OCI-LY7 (cell line): ENCODE measurements at regions of chr14 and their contacts with region 1.

Region 1: DNA sequence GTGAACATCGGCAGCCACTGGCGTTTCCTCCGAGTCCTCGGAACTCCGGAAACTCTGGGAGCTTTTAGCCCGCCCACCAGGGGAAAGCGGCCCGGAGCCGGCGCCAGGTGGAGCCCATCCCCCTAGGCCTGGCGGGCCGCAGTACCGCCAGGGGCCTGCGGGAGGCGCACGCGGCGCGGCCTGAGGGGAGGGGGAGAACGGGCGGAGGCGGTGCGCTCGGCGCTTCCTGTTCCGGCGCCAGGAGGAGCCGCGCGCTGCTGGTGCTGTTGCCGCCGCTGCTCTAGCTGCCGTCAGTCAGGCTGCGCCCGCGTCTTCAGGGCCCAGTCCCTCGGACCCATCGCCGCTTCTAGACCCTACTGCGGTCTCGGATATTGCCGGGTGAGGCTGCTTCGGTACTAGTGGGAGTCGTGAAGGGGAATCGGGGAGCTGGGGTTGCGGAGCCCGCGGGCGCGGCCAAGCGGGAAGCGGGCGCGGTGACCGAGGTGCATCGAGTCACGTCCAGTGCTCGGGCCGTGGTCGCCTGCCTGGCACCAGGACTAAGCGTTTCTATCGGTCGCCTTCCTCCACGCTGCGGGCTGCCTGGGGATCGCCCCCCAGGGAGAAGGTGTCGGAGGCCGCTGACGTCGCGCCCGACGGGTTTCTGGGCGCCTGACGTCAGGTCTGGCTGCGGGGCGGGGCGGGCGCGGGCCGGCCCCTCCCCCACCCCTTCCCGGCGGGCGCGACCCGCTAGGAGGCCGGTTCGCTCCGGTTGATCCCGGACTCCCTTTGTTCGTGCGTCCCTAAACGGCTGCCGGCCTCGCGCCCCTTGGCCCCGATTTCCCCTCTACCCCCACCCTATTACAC is at the start of gene MAPK1IP1L:
- DNase-seq: peak; percentile 92
- H3K4me3 ChIP-seq: peak within 1 kb of the TSS; percentile 95
- H3K27ac ChIP-seq: peak within 1 kb of the TSS; percentile 81
- H3K4me1 ChIP-seq: peaks cover 20% of the 10 kb centered on the region
- CTCF ChIP-seq: peak; percentile 87
- total RNA-seq, gene MAPK1IP1L: 24.6 and 27.9 TPM in 2 replicates

Region 2: DNA sequence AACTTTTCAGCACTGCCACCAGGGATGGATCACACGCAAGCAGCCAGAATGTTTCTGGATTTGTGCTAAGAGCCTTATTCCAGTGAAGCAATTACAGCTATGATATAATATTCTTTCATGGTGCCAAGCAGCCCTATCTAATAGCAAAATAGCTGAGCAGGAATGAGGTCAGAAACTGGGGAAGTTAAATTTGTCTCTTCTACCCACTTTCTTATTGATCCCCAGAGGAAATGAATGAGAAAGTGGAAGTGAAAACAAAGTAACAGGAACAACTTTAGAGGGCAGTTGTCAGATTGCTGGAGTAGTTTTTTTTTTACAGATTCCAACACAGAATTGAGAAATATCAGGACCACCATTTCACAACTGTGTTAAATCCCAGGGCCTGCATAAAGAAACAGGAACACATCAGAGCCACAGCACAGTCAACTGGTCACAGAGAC is 193.8 kb before region 1 on chr14:
- CTCF ChIA-PET with region 1: no interaction called
- POLR2A ChIA-PET with region 1: no interaction called
- intact Hi-C with region 1: no loop called
- DNase-seq: peak; percentile 33
- H3K4me3 ChIP-seq: no peak overlapping the region
- H3K27ac ChIP-seq: no peak overlapping the region
- H3K4me1 ChIP-seq: peaks cover 30% of the 10 kb centered on the region
- CTCF ChIP-seq: no peak

Region 3: GRCh38 chr14:54908190-54908589 is 143.5 kb before region 1 on chr14:
- CTCF ChIA-PET with region 1: no interaction called
- POLR2A ChIA-PET with region 1: no interaction called
- intact Hi-C with region 1: no loop called
- DNase-seq: no peak
- H3K4me3 ChIP-seq: no peak overlapping the region
- H3K27ac ChIP-seq: no peak overlapping the region
- H3K4me1 ChIP-seq: no peaks in the 10 kb centered on the region
- CTCF ChIP-seq: no peak

Region 4: DNA sequence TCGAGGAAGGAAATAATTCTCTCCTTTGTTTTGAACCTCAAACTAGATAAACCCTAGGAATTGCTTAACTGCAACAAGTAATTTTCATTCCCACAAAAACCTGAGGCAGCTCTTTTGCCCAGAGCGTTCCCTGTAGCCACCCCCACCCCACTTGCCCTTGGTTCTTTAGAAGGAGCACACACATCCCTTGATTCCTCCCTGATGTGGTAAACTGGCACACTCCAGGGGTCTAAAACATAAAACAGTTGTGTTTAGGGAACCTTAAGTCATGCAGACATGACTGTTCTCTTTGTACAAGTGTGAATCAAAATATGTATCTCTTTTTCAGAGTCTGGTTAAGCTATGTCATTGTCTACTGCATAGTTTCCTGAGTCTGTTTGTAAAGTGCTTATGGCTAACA is 13.8 kb after region 1 on chr14:
- CTCF ChIA-PET with region 1: no interaction called
- POLR2A ChIA-PET with region 1: interaction called, 15 read pairs
- intact Hi-C with region 1: no loop called
- DNase-seq: no peak
- H3K4me3 ChIP-seq: no peak overlapping the region
- H3K27ac ChIP-seq: no peak overlapping the region
- H3K4me1 ChIP-seq: no peaks in the 10 kb centered on the region
- CTCF ChIP-seq: no peak

Region 5: GRCh38 chr14:55071870-55072640 is 20.4 kb after region 1 on chr14:
- CTCF ChIA-PET with region 1: no interaction called
- POLR2A ChIA-PET with region 1: interaction called, 15 read pairs
- intact Hi-C with region 1: no loop called
- DNase-seq: peak; percentile 36
- H3K4me3 ChIP-seq: peak overlapping the region; percentile 29
- H3K27ac ChIP-seq: peak overlapping the region; percentile 42
- H3K4me1 ChIP-seq: peaks cover 29% of the 10 kb centered on the region
- CTCF ChIP-seq: no peak